Natural killer cell (primary cell): ENCODE measurements at regions of chr11 and their contacts with region 1.

Region 1: DNA sequence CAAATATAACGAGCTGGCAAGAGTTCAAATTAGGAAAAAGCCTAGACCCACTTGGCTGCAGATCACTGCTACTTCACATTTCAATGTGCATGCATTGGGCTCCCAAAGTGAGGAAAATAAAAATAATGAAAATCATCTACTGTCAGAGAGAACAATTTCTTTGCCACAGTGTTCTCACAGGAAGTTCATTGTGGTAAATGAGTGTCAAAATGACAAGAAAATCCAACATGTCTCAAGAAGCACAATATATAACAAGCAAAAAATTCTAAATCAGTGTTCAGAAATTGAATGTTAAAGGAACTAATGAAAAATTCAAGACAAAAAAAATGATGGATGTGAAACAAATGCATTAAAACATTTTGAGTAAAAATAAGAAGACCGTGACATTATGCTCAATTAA is 31.3 kb downstream of the RCN1 start:
- DNase-seq: peak in 1 of 2 donors; percentile 28
- ATAC-seq: peak; percentile 58 to 76 (median 72)
- H3K4me3 ChIP-seq: no peak overlapping the region
- H3K4me3 Mint-ChIP-seq: peak overlapping the region; percentile 78
- H3K27ac ChIP-seq: no peak overlapping the region
- H3K27ac Mint-ChIP-seq: peak overlapping the region; percentile 32 to 81
- H3K4me1 ChIP-seq: peaks cover 29% of the 10 kb centered on the region
- H3K4me1 Mint-ChIP-seq: peaks cover 28 to 52% of the 10 kb centered on the region in 2 donors
- H3K27me3 ChIP-seq: no peaks in the 10 kb centered on the region
- H3K27me3 Mint-ChIP-seq: peaks cover 0 to 27% of the 10 kb centered on the region in 2 donors
- CTCF ChIP-seq: no peak

Region 2: GRCh38 chr11:32099516-32099915 is 22.7 kb before region 1 on chr11:
- intact Hi-C with region 1: loop called (anchors 2 kb)
- DNase-seq: no peak
- ATAC-seq: no peak
- H3K4me3 ChIP-seq: no peak overlapping the region
- H3K4me3 Mint-ChIP-seq: no peak overlapping the region
- H3K27ac ChIP-seq: no peak overlapping the region
- H3K27ac Mint-ChIP-seq: no peak overlapping the region
- H3K4me1 ChIP-seq: peaks cover 18% of the 10 kb centered on the region
- H3K4me1 Mint-ChIP-seq: peaks cover 27 to 28% of the 10 kb centered on the region in 2 donors
- H3K27me3 ChIP-seq: no peaks in the 10 kb centered on the region
- H3K27me3 Mint-ChIP-seq: no peaks in the 10 kb centered on the region
- CTCF ChIP-seq: no peak